WTC11 (cell line): ENCODE measurements at regions of chr19 and their contacts with region 1.

Region 1: GRCh38 chr19:45643024-45643926 is 4.1 kb upstream of the EML2 start:
- DNase-seq: peak; percentile 96
- ATAC-seq: peak; percentile 40
- H3K4me3 Mint-ChIP-seq: peak overlapping the region; percentile 86
- H3K27ac Mint-ChIP-seq: peak overlapping the region; percentile 93
- H3K4me1 Mint-ChIP-seq: peaks cover 40% of the 10 kb centered on the region
- H3K27me3 Mint-ChIP-seq: peaks cover 24% of the 10 kb centered on the region
- CTCF ChIP-seq: peak; percentile 99

Region 2: DNA sequence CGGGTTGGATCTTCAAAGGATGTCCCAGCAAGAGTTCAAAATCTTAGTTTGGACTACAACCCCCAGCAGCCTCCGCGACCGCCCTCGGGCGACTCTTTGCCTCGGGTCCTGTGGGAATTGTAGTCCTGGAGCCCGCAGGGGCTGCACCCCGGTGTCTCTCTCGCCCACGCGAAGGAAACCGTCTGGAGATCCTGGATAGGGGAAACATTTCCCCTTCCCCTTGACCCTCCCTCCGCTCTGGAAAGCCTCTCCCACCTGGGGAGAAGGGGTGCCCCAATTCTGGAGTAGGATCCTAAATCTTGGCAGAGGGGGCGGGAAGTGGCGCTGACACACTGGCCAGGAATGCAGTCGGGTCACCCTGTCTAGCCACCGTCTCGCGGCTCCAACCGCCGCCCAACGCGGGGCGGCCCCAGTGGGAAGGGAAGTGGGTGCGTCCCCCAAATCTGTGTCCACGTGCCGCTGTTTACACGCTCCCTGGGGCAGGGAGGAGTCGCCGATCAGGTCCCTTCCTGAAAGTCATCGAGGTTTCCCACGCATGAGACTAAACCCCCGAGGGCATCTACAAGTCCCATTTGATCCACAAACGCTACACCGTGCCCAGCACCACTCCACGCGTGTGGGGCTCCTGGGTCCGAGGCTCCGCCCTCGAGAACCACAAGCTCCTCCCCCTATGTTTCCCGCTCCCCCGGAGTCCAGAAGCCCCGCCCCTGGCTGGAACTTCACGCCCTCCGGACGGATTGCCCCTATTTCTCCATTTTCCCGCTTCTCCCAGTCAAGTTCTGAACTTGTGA is 237.6 kb before region 1 on chr19:
- CTCF ChIA-PET with region 1: interaction called, 21 read pairs
- POLR2A ChIA-PET with region 1: no interaction called
- DNase-seq: peak; percentile 93
- ATAC-seq: peak; percentile 32
- H3K4me3 Mint-ChIP-seq: peak overlapping the region; percentile 96
- H3K27ac Mint-ChIP-seq: peak overlapping the region; percentile 99
- H3K4me1 Mint-ChIP-seq: peaks cover 23% of the 10 kb centered on the region
- H3K27me3 Mint-ChIP-seq: peaks cover 7% of the 10 kb centered on the region; the same call in 1 of the 2 replicates
- CTCF ChIP-seq: no peak

Region 3: DNA sequence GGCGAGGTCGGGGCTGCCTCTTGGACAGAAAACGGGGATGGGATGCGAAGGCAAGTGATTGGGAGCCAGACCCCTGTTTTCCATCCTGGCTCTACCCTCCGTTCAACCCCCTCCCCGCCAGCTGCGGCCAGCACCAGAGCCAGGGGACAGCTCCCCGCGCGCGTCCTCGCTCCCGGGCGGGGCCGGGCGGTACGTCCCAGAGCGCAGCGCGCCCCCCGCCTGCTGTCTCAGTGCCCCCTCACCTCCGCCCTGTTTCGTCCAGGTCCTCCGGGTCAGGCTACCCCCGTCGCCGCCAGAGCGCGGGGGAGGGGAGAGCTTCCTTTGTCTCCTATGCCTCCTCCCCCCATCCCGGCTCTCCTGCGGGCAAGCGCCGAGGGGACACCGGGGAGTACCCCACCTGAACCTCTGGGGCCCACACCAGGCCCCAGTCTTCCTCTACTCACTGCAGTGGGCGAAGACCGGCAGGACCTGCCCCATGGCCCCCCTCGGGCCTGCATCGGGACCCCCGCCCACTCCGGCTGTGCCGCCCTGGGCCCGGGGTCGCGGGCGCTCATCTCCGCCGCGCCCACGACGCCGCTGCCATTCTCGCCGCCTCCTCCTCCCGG is 146.8 kb before region 1 on chr19:
- CTCF ChIA-PET with region 1: interaction called, 49 read pairs
- POLR2A ChIA-PET with region 1: no interaction called
- DNase-seq: peak; percentile 84
- ATAC-seq: peak; percentile 1
- H3K4me3 Mint-ChIP-seq: peak overlapping the region; percentile 63
- H3K27ac Mint-ChIP-seq: no peak overlapping the region
- H3K4me1 Mint-ChIP-seq: peaks cover 43% of the 10 kb centered on the region
- H3K27me3 Mint-ChIP-seq: peaks cover 39% of the 10 kb centered on the region
- CTCF ChIP-seq: no peak

Region 4: DNA sequence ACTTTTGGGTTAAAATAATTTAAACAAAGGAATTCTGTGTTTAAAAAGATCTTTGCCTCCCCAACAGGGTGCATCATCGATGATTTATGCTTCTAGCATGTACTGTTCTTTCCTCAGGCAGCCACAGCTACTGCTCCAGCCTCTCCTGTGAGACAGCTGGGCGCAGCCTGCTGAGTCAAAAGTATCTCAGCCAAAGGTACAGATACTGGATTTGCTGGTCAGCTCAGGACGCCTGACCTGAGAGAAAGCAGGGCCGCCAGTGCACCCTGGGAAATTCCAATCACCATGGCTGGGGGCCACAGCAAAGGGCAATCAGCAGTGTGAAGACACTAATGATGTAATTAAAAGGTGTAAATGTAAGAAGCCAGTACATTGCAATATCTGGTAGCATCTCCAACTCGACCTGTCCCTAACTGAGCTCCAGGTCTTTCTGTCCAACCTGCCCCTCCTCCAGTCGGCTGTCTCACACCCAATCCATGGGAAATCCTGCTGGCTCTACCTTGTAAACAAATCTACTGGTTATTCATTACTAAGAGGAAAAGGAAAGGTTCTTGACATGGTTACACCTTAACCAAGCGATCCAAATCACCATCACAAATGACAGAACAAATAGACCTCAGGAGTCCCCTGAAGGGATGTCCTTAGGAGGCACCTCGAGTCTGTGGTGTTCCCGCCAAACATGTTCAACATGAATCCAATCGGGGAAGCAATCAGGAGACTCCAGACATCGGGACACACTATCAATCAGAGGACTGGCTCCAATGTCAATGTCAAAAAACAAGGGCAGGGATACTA is 66.0 kb before region 1 on chr19:
- CTCF ChIA-PET with region 1: interaction called, 35 read pairs
- POLR2A ChIA-PET with region 1: no interaction called
- DNase-seq: no peak
- ATAC-seq: peak; percentile 83
- H3K4me3 Mint-ChIP-seq: peak overlapping the region; percentile 20
- H3K27ac Mint-ChIP-seq: peak overlapping the region; percentile 91
- H3K4me1 Mint-ChIP-seq: peaks cover 25% of the 10 kb centered on the region
- H3K27me3 Mint-ChIP-seq: no peaks in the 10 kb centered on the region
- CTCF ChIP-seq: no peak

Region 5: DNA sequence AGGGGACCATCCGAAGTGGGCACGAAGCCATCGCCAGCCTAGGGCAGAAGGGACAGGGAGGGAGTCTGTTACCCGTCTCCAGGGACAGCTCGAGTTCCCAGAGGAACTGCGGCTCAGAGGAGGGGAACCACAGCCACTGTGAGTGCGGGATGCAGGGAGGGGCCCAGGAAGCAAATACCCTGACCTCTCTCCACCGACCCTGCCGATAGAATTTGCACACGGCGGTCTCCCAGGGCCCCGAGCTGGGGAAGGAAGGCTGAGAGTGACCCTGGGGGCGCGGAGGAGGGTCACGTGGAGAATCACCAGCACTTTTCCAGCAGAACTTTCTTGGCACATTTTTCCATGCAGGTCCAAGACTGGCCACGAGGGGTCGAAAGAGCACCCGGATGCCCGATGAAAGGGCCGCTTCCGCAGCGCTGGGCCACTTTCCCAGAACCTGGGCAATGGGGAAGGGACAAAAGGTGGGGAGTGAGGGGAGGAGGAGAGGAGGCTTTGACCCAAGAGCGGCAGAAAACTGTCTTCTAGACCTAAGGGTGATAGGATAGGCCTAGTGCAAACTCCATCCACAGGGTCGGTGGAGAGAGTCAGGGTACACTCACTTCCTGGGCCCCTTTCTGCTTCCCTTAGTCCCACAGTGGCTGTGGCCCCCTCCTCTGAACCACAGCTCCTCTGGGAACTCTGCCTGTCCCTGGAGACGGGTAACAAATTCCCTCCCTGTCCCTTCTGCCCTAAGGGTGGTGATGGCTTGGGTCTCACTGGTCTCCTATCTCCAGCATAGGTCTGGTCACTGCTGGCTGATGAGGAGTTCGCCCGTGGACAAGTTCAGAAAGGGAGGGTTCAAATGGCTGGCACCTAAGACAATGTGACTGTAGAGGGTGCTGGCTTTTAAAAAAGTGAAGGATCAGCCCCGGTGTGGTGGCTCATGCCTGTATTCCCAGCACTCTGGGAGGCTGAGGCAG is 35.9 kb before region 1 on chr19:
- CTCF ChIA-PET with region 1: interaction called, 127 read pairs
- POLR2A ChIA-PET with region 1: interaction called, 5 read pairs
- DNase-seq: peak; percentile 90
- ATAC-seq: peak; percentile 85
- H3K4me3 Mint-ChIP-seq: peak overlapping the region; percentile 77
- H3K27ac Mint-ChIP-seq: no peak overlapping the region; the same call in 1 of the 2 replicates
- H3K4me1 Mint-ChIP-seq: peaks cover 10% of the 10 kb centered on the region; the same call in 1 of the 2 replicates
- H3K27me3 Mint-ChIP-seq: peaks cover 19% of the 10 kb centered on the region
- CTCF ChIP-seq: peak; percentile 80

Region 6: DNA sequence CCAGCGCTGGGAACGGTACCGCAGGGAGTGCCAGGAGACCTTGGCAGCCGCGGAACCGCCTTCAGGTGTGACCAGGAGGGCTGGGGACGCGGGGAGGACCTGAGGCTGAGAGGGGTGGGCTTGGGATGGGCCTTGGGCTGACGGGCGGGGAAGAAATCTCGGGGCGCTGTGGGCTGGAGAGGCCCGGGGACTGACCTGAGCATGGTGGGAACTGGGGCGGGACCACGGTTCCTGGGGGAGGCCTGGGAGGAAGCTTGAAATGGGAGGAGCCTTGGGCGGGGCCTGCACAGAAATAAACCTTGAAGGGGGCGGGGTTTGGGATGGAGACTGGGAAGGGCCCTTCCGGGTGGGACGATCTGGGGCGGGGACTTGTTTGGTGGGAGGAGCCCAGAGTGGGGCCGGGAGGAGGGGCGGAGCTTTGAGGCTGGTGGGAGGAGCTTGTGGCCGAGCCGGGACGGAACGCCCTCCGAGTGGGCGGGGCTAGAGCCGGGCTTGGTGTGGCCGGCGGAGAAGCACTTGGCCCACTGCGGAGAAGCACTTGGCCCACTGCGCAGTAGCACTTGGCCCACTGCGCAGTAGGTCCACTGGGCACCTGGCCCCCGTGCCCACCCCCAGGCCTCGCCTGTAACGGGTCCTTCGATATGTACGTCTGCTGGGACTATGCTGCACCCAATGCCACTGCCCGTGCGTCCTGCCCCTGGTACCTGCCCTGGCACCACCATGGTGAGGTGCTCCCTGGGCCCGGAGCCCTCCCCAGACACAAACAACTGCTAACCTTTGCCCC is 27.6 kb after region 1 on chr19:
- CTCF ChIA-PET with region 1: interaction called, 73 read pairs
- POLR2A ChIA-PET with region 1: interaction called, 9 read pairs
- DNase-seq: peak; percentile 98
- ATAC-seq: peak; percentile 90
- H3K4me3 Mint-ChIP-seq: peak overlapping the region; percentile 73
- H3K27ac Mint-ChIP-seq: no peak overlapping the region
- H3K4me1 Mint-ChIP-seq: peaks cover 27% of the 10 kb centered on the region
- H3K27me3 Mint-ChIP-seq: peaks cover 72% of the 10 kb centered on the region
- CTCF ChIP-seq: no peak

Region 7: GRCh38 chr19:45785781-45786532 is 142.7 kb after region 1 on chr19:
- CTCF ChIA-PET with region 1: no interaction called
- POLR2A ChIA-PET with region 1: no interaction called
- DNase-seq: no peak
- ATAC-seq: no peak
- H3K4me3 Mint-ChIP-seq: no peak overlapping the region
- H3K27ac Mint-ChIP-seq: no peak overlapping the region
- H3K4me1 Mint-ChIP-seq: peaks cover 15% of the 10 kb centered on the region
- H3K27me3 Mint-ChIP-seq: peaks cover 14% of the 10 kb centered on the region
- CTCF ChIP-seq: no peak